Transverse colon (tissue), 4 donors: ENCODE measurements at regions of chr12 and their contacts with region 1.

Region 1: GRCh38 chr12:12684375-12685106 is 11.4 kb downstream of the GPR19 start:
- DNase-seq: no peak
- H3K4me3 ChIP-seq: no peak overlapping the region
- H3K27ac ChIP-seq: no peak overlapping the region
- H3K4me1 ChIP-seq: no peaks in the 10 kb centered on the region
- H3K27me3 ChIP-seq: no peaks in the 10 kb centered on the region
- CTCF ChIP-seq: no peak
- EP300 ChIP-seq: no peak
- POLR2A ChIP-seq: no peak

Region 2: DNA sequence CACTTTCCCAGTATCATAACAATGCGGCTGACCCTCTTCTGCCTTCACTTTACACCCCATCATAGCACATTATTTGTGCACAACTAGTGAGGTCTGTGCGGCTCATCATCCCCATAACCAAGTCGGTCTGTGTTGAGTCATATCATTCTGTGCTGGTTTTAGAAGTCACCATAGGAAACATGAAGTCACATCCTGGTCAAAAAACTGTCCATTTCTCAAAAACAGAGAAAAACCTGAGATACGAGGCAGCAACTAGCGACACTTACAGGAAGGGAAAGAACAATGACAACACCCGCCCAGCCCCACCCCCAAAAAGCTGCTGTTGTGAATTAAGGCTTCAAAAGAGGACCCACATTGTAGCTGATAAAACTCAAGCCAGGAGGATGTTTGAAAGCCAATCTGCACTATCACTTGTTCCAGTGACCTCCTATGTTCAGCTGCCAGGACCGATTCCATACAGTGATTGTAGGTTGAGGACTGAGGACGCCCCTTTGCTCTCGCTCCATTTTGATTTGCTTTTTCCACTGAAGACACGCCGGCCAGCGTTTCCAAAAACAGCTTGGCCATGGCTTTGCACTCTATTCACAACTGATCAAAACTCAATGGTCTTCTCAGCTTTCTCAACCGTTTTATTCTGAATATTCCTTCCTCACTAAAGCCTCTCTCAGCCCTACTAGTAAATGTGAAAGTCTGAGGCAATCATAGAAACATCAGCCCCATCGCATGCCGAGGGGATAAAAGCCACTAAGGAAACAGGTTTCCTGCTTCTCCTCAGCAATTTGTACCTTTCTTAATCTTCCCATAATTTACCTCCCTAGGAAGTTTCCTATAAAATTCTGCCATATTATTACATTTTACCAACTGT is 209.4 kb before region 1 on chr12:
- in situ Hi-C with region 1: no loop called
- intact Hi-C with region 1: no loop called
- DNase-seq: no peak
- H3K4me3 ChIP-seq: no peak overlapping the region
- H3K27ac ChIP-seq: peak overlapping the region; percentile 12 to 49 (median 38)
- H3K4me1 ChIP-seq: no peaks in the 10 kb centered on the region
- H3K27me3 ChIP-seq: no peaks in the 10 kb centered on the region
- CTCF ChIP-seq: no peak
- EP300 ChIP-seq: no peak
- POLR2A ChIP-seq: peak; percentile 15

Region 3: DNA sequence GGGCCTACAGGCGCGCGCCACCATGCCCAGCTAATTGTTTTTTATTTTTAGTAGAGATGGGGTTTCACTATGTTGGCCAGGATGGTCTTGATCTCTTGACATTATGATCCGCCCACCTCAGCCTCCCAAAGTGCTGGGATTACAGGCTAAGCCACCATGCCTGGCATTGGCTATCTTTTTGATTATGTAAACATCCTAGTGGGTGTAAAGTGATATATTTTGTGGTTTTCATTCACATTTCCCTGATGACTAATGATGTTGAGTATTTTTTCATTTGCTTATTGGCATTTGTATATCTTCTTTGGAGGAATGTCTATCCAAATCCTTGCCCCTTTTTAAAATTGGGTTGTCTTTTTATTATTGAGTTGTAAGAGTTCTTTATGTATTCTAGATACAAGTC is 56.5 kb before region 1 on chr12:
- in situ Hi-C with region 1: no loop called
- intact Hi-C with region 1: loop called (anchors 5 kb)
- DNase-seq: no peak
- H3K4me3 ChIP-seq: no peak overlapping the region
- H3K27ac ChIP-seq: no peak overlapping the region
- H3K4me1 ChIP-seq: peaks cover 0 to 18% (median 6%) of the 10 kb centered on the region in 4 donors
- H3K27me3 ChIP-seq: no peaks in the 10 kb centered on the region
- CTCF ChIP-seq: no peak
- EP300 ChIP-seq: no peak
- POLR2A ChIP-seq: no peak

Region 4: GRCh38 chr12:12661086-12661485 is 23.5 kb before region 1 on chr12:
- in situ Hi-C with region 1: no loop called
- intact Hi-C with region 1: no loop called
- DNase-seq: no peak
- H3K4me3 ChIP-seq: no peak overlapping the region
- H3K27ac ChIP-seq: no peak overlapping the region
- H3K4me1 ChIP-seq: peaks cover 0 to 1% (median 0%) of the 10 kb centered on the region in 4 donors
- H3K27me3 ChIP-seq: no peaks in the 10 kb centered on the region
- CTCF ChIP-seq: no peak
- EP300 ChIP-seq: no peak
- POLR2A ChIP-seq: no peak